CD8-positive, alpha-beta T cell (primary cell): ENCODE measurements at regions of chr20 and their contacts with region 1.

Region 1: GRCh38 chr20:57596998-57597939 is 23.0 kb downstream of the ZBP1 start:
- DNase-seq: peak; percentile 53 to 89 (median 75)
- ATAC-seq: peak; percentile 94
- H3K4me3 ChIP-seq: peak overlapping the region; percentile 9 to 29
- H3K4me3 Mint-ChIP-seq: no peak overlapping the region
- H3K27ac ChIP-seq: no peak overlapping the region
- H3K27ac Mint-ChIP-seq: no peak overlapping the region
- H3K4me1 ChIP-seq: peaks cover 8% of the 10 kb centered on the region
- H3K4me1 Mint-ChIP-seq: peaks cover 6% of the 10 kb centered on the region
- H3K27me3 ChIP-seq: peaks cover 0 to 3% of the 10 kb centered on the region in 2 experiments
- H3K27me3 Mint-ChIP-seq: peaks cover 2% of the 10 kb centered on the region
- CTCF ChIP-seq: peak; percentile 81

Region 2: DNA sequence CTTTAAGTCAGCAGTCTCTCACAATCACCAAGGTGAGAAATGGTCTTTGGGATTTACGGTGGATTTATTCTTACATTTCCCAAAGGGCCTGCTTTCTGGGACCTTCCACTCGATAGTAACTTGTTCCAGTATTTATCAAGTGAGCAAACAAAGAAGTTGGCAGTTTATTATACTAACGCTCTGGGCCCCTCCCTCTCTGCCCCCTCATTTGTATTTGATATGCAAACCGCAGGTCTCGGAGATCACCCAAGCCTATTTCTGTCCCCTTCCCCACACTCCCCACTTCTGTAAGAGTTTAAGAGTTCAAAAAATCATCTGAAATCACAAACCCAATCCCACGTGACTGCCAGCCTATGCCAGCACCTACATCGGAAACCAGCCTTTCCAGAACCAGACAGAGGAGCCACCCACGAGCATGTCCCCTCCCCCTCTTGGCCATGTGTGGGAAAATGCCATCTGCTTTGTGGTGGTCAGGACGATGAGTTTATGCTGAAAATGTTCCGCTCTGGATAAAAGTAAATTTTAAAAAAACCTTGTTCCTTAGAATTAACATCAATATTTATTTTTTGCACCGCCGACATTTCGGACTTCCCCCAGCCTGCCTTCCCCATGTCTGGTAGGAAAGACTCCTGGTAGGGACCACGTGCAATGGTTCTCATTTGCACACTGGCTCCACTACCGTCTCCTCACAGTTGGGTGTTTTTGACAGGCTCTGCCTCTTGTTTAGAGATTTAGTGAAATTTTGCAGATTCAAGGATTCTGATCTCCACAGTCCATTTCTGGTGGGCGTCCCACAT is 687.2 kb before region 1 on chr20:
- CTCF ChIA-PET with region 1: no interaction called
- POLR2A ChIA-PET with region 1: no interaction called
- intact Hi-C with region 1: no loop called
- DNase-seq: no peak
- ATAC-seq: no peak
- H3K4me3 ChIP-seq: no peak overlapping the region
- H3K4me3 Mint-ChIP-seq: no peak overlapping the region
- H3K27ac ChIP-seq: no peak overlapping the region
- H3K27ac Mint-ChIP-seq: no peak overlapping the region
- H3K4me1 ChIP-seq: no peaks in the 10 kb centered on the region
- H3K4me1 Mint-ChIP-seq: no peaks in the 10 kb centered on the region
- H3K27me3 ChIP-seq: no peaks in the 10 kb centered on the region
- H3K27me3 Mint-ChIP-seq: peaks cover 2% of the 10 kb centered on the region
- CTCF ChIP-seq: no peak

Region 3: GRCh38 chr20:57089691-57090150 is 507.5 kb before region 1 on chr20:
- CTCF ChIA-PET with region 1: interaction called, 5 read pairs
- POLR2A ChIA-PET with region 1: no interaction called
- intact Hi-C with region 1: loop called in 1 of 2 experiments (anchors 1 kb)
- DNase-seq: peak; percentile 19 to 61 (median 50)
- ATAC-seq: peak; percentile 56
- H3K4me3 ChIP-seq: no peak overlapping the region
- H3K4me3 Mint-ChIP-seq: no peak overlapping the region
- H3K27ac ChIP-seq: no peak overlapping the region
- H3K27ac Mint-ChIP-seq: no peak overlapping the region
- H3K4me1 ChIP-seq: peaks cover 6% of the 10 kb centered on the region
- H3K4me1 Mint-ChIP-seq: peaks cover 16% of the 10 kb centered on the region
- H3K27me3 ChIP-seq: no peaks in the 10 kb centered on the region
- H3K27me3 Mint-ChIP-seq: peaks cover 18% of the 10 kb centered on the region
- CTCF ChIP-seq: peak; percentile 61

Region 4: GRCh38 chr20:57498425-57499400 is 98.6 kb before region 1 on chr20:
- CTCF ChIA-PET with region 1: interaction called, 8 read pairs
- POLR2A ChIA-PET with region 1: no interaction called
- intact Hi-C with region 1: loop called (anchors 1 to 2 kb)
- DNase-seq: peak in 5 of 9 experiments; percentile 34 to 61 (median 42)
- ATAC-seq: peak; percentile 74
- H3K4me3 ChIP-seq: no peak overlapping the region
- H3K4me3 Mint-ChIP-seq: no peak overlapping the region
- H3K27ac ChIP-seq: no peak overlapping the region
- H3K27ac Mint-ChIP-seq: no peak overlapping the region
- H3K4me1 ChIP-seq: peaks cover 6% of the 10 kb centered on the region
- H3K4me1 Mint-ChIP-seq: peaks cover 13% of the 10 kb centered on the region
- H3K27me3 ChIP-seq: peaks cover 0 to 4% of the 10 kb centered on the region in 2 experiments
- H3K27me3 Mint-ChIP-seq: peaks cover 32% of the 10 kb centered on the region
- CTCF ChIP-seq: peak; percentile 48

Region 5: DNA sequence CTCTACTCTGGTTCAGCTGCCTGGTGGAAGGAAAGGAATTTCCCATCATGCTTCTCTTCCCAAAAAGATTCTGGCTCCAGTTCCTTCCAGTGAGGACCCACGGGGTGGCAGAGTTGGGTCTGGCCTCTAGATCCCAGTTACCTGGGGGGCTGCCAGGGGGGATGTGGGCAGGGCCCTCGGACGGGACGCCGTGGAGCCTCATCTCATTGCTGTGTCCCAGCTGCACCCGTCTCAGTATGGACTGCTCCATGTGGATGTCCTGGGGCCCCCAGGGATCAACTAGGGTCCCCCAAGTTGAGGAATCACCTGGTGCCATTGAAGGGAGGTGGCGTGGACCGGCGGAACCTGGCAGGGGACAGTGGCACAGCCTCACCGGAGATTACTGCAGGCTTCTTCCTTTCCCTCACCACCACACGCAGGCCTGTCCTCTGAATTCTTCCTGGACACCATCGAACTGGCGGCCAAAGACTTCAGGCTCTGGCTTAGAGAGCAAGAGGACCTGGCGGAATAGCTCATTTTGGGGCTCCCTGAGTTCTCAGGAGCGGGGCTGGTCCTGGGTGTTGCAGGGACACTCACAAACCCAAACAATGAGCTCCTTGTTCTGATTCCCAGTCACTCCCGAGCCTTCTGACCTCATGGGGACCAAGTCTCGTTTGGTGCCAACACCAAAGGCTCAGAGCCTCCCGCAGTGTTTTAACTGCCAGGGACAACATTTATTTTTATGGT is 14.5 kb after region 1 on chr20:
- CTCF ChIA-PET with region 1: interaction called, 78 read pairs
- POLR2A ChIA-PET with region 1: interaction called, 4 read pairs
- intact Hi-C with region 1: no loop called
- DNase-seq: no peak
- ATAC-seq: no peak
- H3K4me3 ChIP-seq: no peak overlapping the region
- H3K4me3 Mint-ChIP-seq: no peak overlapping the region
- H3K27ac ChIP-seq: no peak overlapping the region
- H3K27ac Mint-ChIP-seq: no peak overlapping the region
- H3K4me1 ChIP-seq: peaks cover 10% of the 10 kb centered on the region
- H3K4me1 Mint-ChIP-seq: peaks cover 3% of the 10 kb centered on the region
- H3K27me3 ChIP-seq: no peaks in the 10 kb centered on the region
- H3K27me3 Mint-ChIP-seq: no peaks in the 10 kb centered on the region
- CTCF ChIP-seq: no peak

Region 6: DNA sequence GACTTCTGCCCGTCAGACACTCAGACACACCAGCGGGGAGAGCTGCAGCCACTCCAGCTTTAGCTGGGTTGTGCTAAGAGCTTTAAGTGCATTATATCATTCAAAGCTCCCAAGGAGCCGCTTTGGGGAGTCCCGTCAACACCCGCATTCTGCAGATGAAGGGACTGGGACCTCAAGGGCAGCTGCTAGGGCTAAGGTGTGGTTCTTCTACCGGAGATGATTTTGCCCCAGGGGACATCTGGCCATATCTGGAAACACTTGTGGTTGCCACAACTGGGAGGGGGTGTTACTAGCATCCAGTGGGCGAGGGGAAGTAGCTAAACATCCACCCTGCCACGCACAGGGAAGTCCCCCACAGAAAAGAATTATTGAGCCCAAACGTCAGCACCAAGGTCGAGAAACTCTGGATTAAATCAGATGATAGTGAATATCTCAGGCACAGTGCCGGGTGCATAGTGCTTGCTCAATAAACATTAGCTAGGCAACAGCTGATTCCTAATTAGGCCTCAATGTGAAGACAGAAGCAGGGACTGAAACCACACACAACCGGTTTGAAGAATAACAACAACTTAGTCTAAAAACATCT is 83.0 kb after region 1 on chr20:
- CTCF ChIA-PET with region 1: interaction called, 89 read pairs
- POLR2A ChIA-PET with region 1: no interaction called
- intact Hi-C with region 1: loop called in 1 of 2 experiments (anchors 1 kb)
- DNase-seq: peak in 3 of 9 experiments; percentile 25 to 60 (median 38)
- ATAC-seq: peak; percentile 11
- H3K4me3 ChIP-seq: no peak overlapping the region
- H3K4me3 Mint-ChIP-seq: no peak overlapping the region
- H3K27ac ChIP-seq: no peak overlapping the region
- H3K27ac Mint-ChIP-seq: peak overlapping the region; percentile 25
- H3K4me1 ChIP-seq: peaks cover 23% of the 10 kb centered on the region
- H3K4me1 Mint-ChIP-seq: peaks cover 39% of the 10 kb centered on the region
- H3K27me3 ChIP-seq: no peaks in the 10 kb centered on the region
- H3K27me3 Mint-ChIP-seq: peaks cover 2% of the 10 kb centered on the region
- CTCF ChIP-seq: no peak

Region 7: GRCh38 chr20:58209652-58210397 is 612.6 kb after region 1 on chr20:
- CTCF ChIA-PET with region 1: interaction called, 56 read pairs
- POLR2A ChIA-PET with region 1: no interaction called
- intact Hi-C with region 1: loop called (anchors 1 kb)
- DNase-seq: peak; percentile 78 to 95 (median 87)
- ATAC-seq: peak; percentile 90
- H3K4me3 ChIP-seq: no peak overlapping the region
- H3K4me3 Mint-ChIP-seq: peak overlapping the region; percentile 1
- H3K27ac ChIP-seq: peak overlapping the region in 1 of 2 experiments; percentile 43
- H3K27ac Mint-ChIP-seq: peak overlapping the region; percentile 76
- H3K4me1 ChIP-seq: no peaks in the 10 kb centered on the region
- H3K4me1 Mint-ChIP-seq: peaks cover 3% of the 10 kb centered on the region
- H3K27me3 ChIP-seq: peaks cover 0 to 7% of the 10 kb centered on the region in 2 experiments
- H3K27me3 Mint-ChIP-seq: peaks cover 9% of the 10 kb centered on the region
- CTCF ChIP-seq: peak; percentile 100